BJ (cell line): ENCODE measurements at regions of chr7 and their contacts with region 1.

Region 1: GRCh38 chr7:5557920-5558401 is 134.3 kb upstream of the TNRC18 start:
- DNase-seq: no peak
- H3K4me3 ChIP-seq: no peak overlapping the region
- H3K27me3 ChIP-seq: no peaks in the 10 kb centered on the region
- CTCF ChIP-seq: no peak

Region 2: GRCh38 chr7:5477723-5478531 is 80.0 kb before region 1 on chr7:
- CTCF ChIA-PET with region 1: no interaction called
- POLR2A ChIA-PET with region 1: no interaction called
- DNase-seq: no peak
- H3K4me3 ChIP-seq: no peak overlapping the region
- H3K27me3 ChIP-seq: no peaks in the 10 kb centered on the region
- CTCF ChIP-seq: peak; percentile 53

Region 3: DNA sequence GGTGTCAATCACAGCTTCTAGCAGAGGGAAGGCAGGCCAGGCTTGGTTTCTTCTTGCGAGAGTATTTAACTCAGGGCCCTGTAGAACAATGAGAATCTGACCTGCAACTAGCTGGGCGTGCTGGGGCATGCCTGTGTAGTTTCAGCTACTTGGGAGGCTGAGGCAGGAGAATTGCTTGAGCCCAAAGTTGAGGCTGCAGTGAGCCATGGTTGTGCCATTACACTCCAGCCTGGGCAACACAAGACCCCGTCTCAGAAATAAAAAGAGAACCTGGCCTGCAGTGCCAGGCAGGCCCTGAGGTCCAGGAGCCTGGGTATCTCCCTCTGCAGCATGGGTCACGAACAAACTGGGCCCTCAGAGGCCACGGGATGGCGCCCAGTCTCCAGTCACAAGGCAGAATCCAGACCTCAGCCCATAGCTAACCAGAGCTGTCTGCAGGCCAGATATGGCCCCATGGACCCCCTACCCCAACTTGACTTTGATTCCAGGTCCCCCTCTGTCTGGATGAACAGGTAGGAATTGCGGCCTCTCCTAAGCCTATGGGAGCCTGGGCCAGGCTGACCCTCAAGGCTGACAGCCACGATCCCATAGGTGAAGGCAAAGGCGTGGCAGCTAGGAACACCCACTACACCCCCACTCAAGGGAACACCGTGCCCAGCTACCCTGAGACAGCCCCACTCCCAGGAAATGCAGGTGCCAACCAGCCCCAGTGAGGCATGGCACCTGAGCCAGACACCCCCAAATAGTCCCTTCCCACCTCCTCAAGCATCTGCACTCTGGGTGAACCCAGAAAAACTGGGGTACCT is 31.7 kb before region 1 on chr7:
- CTCF ChIA-PET with region 1: interaction called, 23 read pairs
- POLR2A ChIA-PET with region 1: interaction called, 7 read pairs
- DNase-seq: no peak
- H3K4me3 ChIP-seq: peak overlapping the region; percentile 89
- H3K27me3 ChIP-seq: no peaks in the 10 kb centered on the region
- CTCF ChIP-seq: 0 out of 2 replicates have a peak, but pooled peaks have one; percentile 10

Region 4: GRCh38 chr7:5694912-5695726 is 137.2 kb after region 1 on chr7:
- CTCF ChIA-PET with region 1: interaction called, 14 read pairs
- POLR2A ChIA-PET with region 1: interaction called, 3 read pairs
- DNase-seq: peak; percentile 53
- H3K4me3 ChIP-seq: peak overlapping the region; percentile 19
- H3K27me3 ChIP-seq: no peaks in the 10 kb centered on the region
- CTCF ChIP-seq: no peak

Region 5: DNA sequence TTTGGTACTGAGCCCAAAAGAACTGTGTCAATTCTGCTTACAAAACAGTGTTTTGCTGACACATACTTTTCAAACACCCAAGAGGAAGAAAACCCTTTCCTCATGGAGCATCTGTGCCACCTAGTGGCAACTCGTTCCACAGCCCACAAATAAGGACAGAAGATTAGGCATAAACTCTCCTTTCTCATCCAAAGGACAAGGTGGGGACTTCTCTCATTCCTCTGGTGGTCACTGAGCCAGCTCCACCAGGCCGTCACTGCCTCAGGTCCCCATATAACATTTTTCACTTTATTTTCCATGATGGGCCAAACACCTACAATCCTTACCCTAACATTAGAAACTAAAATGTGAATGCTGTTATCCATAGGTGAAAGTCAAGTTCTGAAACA is 146.6 kb after region 1 on chr7:
- CTCF ChIA-PET with region 1: interaction called, 18 read pairs
- POLR2A ChIA-PET with region 1: no interaction called
- DNase-seq: peak; percentile 41
- H3K4me3 ChIP-seq: no peak overlapping the region
- H3K27me3 ChIP-seq: no peaks in the 10 kb centered on the region
- CTCF ChIP-seq: peak; percentile 91